Activated CD8-positive, alpha-beta T cell treated with anti-CD3 and anti-CD28 coated beads for 36 hours (primary cell): ENCODE measurements at regions of chr10 and their contacts with region 1.

Region 1: DNA sequence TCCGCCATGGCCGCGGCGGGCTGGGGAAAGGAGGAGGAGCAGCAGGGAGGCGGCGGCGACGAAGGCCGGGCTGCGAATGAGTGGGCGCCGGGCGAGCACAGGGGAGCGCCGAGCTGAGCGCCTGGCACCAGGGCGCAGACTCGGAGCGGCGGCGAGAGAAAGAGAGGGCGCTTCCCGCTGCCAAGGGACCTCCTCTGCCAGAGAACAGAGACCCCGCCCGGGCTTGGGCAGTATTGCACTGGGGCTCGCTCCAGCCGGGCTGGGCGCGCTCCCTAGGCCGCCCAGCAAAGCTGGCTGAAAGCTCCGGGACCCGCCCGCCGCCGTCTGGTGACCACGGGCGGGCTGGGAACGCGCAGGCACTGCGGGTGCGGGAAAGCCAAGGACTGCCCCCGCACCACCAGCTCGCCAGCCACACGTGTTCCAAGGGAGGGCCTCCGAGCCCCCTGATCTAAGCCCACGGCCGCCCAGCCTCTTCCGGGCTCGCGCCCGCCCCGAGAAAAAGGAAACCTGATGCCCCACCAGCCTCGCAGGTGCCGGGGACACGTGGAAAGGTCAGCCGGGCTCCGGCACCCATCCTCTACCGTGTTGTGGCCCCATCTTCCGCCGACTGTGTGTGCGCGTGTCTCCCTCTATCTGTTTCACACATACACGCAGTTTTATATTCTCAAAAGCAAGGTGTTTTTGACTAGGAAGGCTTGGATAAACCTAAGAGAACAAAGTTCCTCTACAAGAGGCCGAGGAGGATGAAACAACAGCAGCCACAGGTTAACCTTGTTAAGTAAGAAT is at the start of gene CCDC6:
- DNase-seq: peak; percentile 96
- ATAC-seq: peak; percentile 85
- H3K4me3 Mint-ChIP-seq: peak within 1 kb of the TSS; percentile 94
- H3K27ac Mint-ChIP-seq: peak within 1 kb of the TSS; percentile 98
- H3K4me1 Mint-ChIP-seq: peaks cover 55% of the 10 kb centered on the region
- H3K27me3 Mint-ChIP-seq: no peaks in the 10 kb centered on the region
- CTCF ChIP-seq: peak; percentile 73
- total RNA-seq, gene CCDC6: 34.8 to 35.8 TPM

Region 2: DNA sequence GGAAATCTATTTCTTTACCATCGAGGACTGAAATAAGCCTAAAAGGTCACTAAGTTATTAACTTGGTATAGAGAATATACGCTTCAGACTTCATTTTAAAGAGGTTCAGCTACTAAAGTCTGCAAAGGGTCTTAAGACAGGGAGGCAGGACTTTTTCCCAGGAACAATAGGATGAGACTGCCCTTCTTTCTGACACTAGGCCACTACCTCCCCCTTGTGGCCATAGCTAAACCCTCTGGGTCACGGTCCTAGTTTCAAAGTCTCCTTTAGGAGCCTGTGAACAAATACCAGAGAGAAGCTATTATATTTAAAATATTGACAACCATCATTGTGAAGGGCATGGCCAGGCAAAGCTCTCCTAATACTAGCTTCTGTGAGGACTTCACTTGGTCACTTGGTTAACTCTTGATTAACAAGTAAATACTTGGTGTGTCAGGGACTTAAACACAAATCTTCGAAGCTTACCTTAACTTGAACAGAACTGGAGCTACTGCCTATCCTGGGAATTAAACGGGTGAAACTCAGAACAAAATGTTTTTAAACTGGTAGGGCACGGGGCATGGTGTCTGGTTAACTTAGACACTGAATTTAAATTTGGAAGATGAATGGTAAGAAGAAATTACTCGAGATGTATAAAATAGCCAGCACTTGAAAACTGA is 75.9 kb before region 1 on chr10:
- CTCF ChIA-PET with region 1: interaction called, 25 read pairs
- POLR2A ChIA-PET with region 1: interaction called, 3 read pairs
- intact Hi-C with region 1: no loop called
- DNase-seq: peak; percentile 41
- ATAC-seq: peak; percentile 30
- H3K4me3 Mint-ChIP-seq: no peak overlapping the region
- H3K27ac Mint-ChIP-seq: no peak overlapping the region
- H3K4me1 Mint-ChIP-seq: peaks cover 43% of the 10 kb centered on the region
- H3K27me3 Mint-ChIP-seq: no peaks in the 10 kb centered on the region
- CTCF ChIP-seq: peak; percentile 73

Region 3: GRCh38 chr10:59865101-59865500 is 41.5 kb before region 1 on chr10:
- CTCF ChIA-PET with region 1: interaction called, 66 read pairs
- POLR2A ChIA-PET with region 1: interaction called, 21 read pairs
- intact Hi-C with region 1: loop called (anchors 5 kb)
- DNase-seq: no peak
- ATAC-seq: peak; percentile 41
- H3K4me3 Mint-ChIP-seq: peak overlapping the region; percentile 20
- H3K27ac Mint-ChIP-seq: peak overlapping the region; percentile 55
- H3K4me1 Mint-ChIP-seq: peaks cover 64% of the 10 kb centered on the region
- H3K27me3 Mint-ChIP-seq: no peaks in the 10 kb centered on the region
- CTCF ChIP-seq: peak; percentile 49

Region 4: GRCh38 chr10:59872892-59873463 is 33.6 kb before region 1 on chr10:
- CTCF ChIA-PET with region 1: interaction called, 40 read pairs
- POLR2A ChIA-PET with region 1: interaction called, 23 read pairs
- intact Hi-C with region 1: loop called (anchors 5 kb)
- DNase-seq: no peak
- ATAC-seq: no peak
- H3K4me3 Mint-ChIP-seq: no peak overlapping the region
- H3K27ac Mint-ChIP-seq: peak overlapping the region; percentile 39
- H3K4me1 Mint-ChIP-seq: peaks cover 79% of the 10 kb centered on the region
- H3K27me3 Mint-ChIP-seq: no peaks in the 10 kb centered on the region
- CTCF ChIP-seq: no peak

Region 5: DNA sequence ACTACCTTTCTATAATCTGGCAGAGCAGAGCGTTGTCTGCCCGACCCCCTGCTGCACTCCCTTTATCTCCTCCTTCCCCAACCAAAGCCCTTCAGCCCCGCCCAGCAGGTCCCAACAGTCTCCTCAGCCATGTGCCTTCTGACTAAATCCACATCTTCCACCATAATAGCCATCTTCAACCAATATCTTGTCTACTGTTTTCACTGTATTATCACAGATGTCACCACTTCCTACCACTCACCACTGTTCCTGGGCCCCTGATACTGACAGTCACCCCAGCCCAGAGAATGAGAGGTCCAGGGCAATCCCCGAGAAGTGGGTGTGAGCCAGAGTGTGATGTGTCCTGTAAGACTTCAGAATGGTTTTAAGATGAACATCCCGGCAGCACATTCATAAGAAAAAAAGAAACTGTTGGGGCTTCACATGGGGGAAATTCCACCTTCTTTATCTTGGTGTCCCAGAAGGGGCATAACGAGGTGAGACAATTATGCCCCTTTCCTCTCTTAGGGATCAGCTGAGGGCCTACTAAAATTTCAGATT is 25.6 kb before region 1 on chr10:
- CTCF ChIA-PET with region 1: interaction called, 40 read pairs
- POLR2A ChIA-PET with region 1: interaction called, 23 read pairs
- intact Hi-C with region 1: loop called (anchors 1 kb)
- DNase-seq: peak; percentile 93
- ATAC-seq: peak; percentile 86
- H3K4me3 Mint-ChIP-seq: peak overlapping the region; percentile 43
- H3K27ac Mint-ChIP-seq: peak overlapping the region; percentile 89
- H3K4me1 Mint-ChIP-seq: peaks cover 84% of the 10 kb centered on the region
- H3K27me3 Mint-ChIP-seq: no peaks in the 10 kb centered on the region
- CTCF ChIP-seq: no peak

Region 6: GRCh38 chr10:59891349-59892335 is 15.0 kb before region 1 on chr10:
- CTCF ChIA-PET with region 1: interaction called, 15 read pairs
- POLR2A ChIA-PET with region 1: interaction called, 35 read pairs
- intact Hi-C with region 1: no loop called
- DNase-seq: no peak
- ATAC-seq: no peak
- H3K4me3 Mint-ChIP-seq: no peak overlapping the region
- H3K27ac Mint-ChIP-seq: no peak overlapping the region
- H3K4me1 Mint-ChIP-seq: peaks cover 76% of the 10 kb centered on the region
- H3K27me3 Mint-ChIP-seq: no peaks in the 10 kb centered on the region
- CTCF ChIP-seq: no peak

Region 7: GRCh38 chr10:60008816-60009215 is 102.2 kb after region 1 on chr10:
- CTCF ChIA-PET with region 1: no interaction called
- POLR2A ChIA-PET with region 1: no interaction called
- intact Hi-C with region 1: no loop called
- DNase-seq: no peak
- ATAC-seq: no peak
- H3K4me3 Mint-ChIP-seq: no peak overlapping the region
- H3K27ac Mint-ChIP-seq: no peak overlapping the region
- H3K4me1 Mint-ChIP-seq: no peaks in the 10 kb centered on the region
- H3K27me3 Mint-ChIP-seq: peaks cover 4% of the 10 kb centered on the region
- CTCF ChIP-seq: no peak

Region 8: DNA sequence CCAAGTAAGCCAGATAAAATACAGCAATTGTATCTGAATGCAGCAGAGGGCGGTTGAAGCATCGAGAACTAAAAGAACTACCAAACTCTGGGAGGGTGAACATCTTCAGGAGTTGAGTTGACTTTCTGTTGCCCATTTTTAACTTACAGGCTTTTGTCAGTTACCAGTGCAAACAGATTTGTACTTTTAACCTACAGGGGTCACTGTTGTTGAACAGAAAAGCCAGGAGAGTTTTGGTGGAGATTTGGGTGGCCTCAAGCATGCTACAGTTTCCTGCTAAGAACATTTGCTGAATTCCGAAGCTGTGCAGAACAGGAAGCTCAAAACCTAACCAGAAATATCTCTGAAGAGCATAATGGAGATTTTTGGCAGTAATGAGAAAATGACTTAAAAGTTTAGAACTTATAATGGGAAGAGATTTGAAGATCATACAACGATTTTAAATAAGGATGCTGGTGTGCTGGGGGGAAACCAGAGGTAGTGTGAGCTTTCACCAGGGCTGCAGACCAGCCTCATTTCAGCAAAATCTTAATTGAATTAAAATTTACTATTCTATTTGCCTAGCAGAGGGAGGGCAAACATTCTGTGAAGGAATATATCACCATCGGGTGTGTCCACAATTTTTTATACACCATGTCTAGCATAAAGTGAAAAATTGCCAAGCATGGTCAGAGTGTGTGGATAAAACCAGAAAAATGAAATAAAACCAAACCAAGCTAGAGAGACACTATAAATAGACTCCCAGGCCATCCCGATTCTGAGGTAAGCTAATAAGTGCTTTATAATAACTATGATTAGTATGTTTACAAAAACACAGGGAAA is 208.4 kb after region 1 on chr10:
- CTCF ChIA-PET with region 1: no interaction called
- POLR2A ChIA-PET with region 1: no interaction called
- intact Hi-C with region 1: no loop called
- DNase-seq: peak; percentile 3
- ATAC-seq: no peak
- H3K4me3 Mint-ChIP-seq: no peak overlapping the region
- H3K27ac Mint-ChIP-seq: no peak overlapping the region
- H3K4me1 Mint-ChIP-seq: no peaks in the 10 kb centered on the region
- H3K27me3 Mint-ChIP-seq: peaks cover 3% of the 10 kb centered on the region
- CTCF ChIP-seq: peak; percentile 74

Region 9: GRCh38 chr10:60384708-60385398 is 478.2 kb after region 1 on chr10:
- CTCF ChIA-PET with region 1: no interaction called
- POLR2A ChIA-PET with region 1: no interaction called
- intact Hi-C with region 1: no loop called
- DNase-seq: no peak
- ATAC-seq: no peak
- H3K4me3 Mint-ChIP-seq: no peak overlapping the region
- H3K27ac Mint-ChIP-seq: no peak overlapping the region
- H3K4me1 Mint-ChIP-seq: peaks cover 3% of the 10 kb centered on the region
- H3K27me3 Mint-ChIP-seq: no peaks in the 10 kb centered on the region
- CTCF ChIP-seq: no peak